Activated B cell treated with CpG ODN at 0.5 μM for 24 hours (primary cell): ENCODE measurements at regions of chr1 and their contacts with region 1.

Region 1: DNA sequence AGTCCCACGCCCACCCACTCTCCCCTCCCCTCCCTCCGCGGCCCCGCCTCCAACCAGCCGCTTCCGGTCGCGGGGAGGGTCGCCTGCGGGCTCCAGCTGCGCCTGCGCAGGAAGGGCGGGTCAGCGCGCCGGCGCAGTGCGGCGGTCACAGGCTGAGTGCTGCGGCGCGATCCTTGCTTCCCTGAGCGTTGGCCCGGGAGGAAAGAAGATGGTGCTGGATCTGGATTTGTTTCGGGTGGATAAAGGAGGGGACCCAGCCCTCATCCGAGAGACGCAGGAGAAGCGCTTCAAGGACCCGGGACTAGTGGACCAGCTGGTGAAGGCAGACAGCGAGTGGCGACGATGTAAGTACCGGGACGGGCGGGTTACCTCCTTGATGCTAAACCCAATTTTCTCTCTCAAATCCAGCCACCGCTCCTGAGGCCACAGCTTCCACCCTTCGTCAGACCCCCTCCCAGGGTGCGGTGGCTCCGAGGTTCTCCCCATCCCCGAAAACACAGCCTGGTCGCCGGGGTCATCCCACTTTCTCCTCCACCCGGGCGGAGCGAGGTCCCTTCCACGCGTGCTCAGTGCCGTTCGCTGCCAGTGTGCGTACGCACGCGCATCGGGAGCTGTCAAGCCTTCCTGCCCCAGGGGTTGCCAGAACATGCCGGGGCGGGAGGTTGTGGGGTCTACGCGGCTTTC is at the start of gene SARS1:
- DNase-seq: peak; percentile 93
- ATAC-seq: peak; percentile 84
- H3K4me3 Mint-ChIP-seq: peak within 1 kb of the TSS; percentile 100
- H3K27ac Mint-ChIP-seq: peak within 1 kb of the TSS; percentile 98
- H3K4me1 Mint-ChIP-seq: peaks cover 39% of the 10 kb centered on the region
- H3K27me3 Mint-ChIP-seq: no peaks in the 10 kb centered on the region
- CTCF ChIP-seq: no peak
- total RNA-seq, gene SARS1: 182 and 188 TPM in 2 replicates

Region 2: GRCh38 chr1:108963052-108963686 is 250.8 kb before region 1 on chr1 and contains the start of gene CLCC1:
- CTCF ChIA-PET with region 1: no interaction called
- POLR2A ChIA-PET with region 1: interaction called, 12 read pairs
- intact Hi-C with region 1: loop called (anchors 1 kb)
- DNase-seq: peak; percentile 84
- ATAC-seq: peak; percentile 94
- H3K4me3 Mint-ChIP-seq: peak within 1 kb of the TSS; percentile 88
- H3K27ac Mint-ChIP-seq: peak within 1 kb of the TSS; percentile 91
- H3K4me1 Mint-ChIP-seq: peaks cover 35% of the 10 kb centered on the region
- H3K27me3 Mint-ChIP-seq: no peaks in the 10 kb centered on the region
- CTCF ChIP-seq: no peak
- total RNA-seq, gene CLCC1: 19.5 and 28.3 TPM in 2 replicates

Region 3: GRCh38 chr1:109075531-109076490 is 138.1 kb before region 1 on chr1 and contains the start of gene TAF13:
- CTCF ChIA-PET with region 1: no interaction called
- POLR2A ChIA-PET with region 1: interaction called, 4 read pairs
- intact Hi-C with region 1: loop called (anchors 1 kb)
- DNase-seq: peak; percentile 92
- ATAC-seq: peak; percentile 99
- H3K4me3 Mint-ChIP-seq: peak within 1 kb of the TSS; percentile 97
- H3K27ac Mint-ChIP-seq: peak within 1 kb of the TSS; percentile 96
- H3K4me1 Mint-ChIP-seq: peaks cover 25% of the 10 kb centered on the region
- H3K27me3 Mint-ChIP-seq: no peaks in the 10 kb centered on the region
- CTCF ChIP-seq: no peak
- total RNA-seq, gene TAF13: 18.5 and 21.2 TPM in 2 replicates

Region 4: DNA sequence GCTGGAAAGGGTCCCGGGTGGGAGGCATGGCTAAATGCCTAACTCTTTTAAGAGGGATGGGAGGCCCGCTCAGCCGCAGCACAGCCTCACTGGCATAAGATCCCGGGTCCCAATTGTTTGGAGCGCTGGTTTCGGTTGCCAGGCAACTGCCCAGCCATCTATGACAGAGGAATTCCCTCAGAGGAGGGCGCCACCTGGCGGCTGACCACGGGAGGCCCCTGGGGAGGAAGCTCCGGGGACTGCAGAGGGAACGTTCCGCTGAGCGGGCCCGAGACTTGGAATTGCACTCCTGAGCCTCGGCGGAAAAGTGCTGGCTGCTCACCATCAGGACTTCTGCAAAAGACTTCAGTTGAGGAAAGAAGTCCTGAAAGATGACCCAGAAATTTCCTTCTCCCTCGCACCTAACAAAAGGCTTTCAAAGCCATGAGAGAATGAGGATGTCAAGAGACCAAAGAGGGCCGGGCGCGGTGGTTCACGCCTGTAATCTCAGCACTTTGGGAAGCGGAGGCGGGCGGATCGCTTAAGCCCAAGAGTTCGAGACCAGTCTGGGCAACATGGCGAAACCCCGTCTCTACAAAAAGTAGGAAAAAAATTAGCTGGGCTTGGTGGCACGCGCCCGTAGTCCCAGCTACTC is 101.2 kb before region 1 on chr1:
- CTCF ChIA-PET with region 1: no interaction called
- POLR2A ChIA-PET with region 1: interaction called, 3 read pairs
- intact Hi-C with region 1: loop called (anchors 5 kb)
- DNase-seq: peak; percentile 83
- ATAC-seq: peak; percentile 75
- H3K4me3 Mint-ChIP-seq: peak overlapping the region; percentile 77
- H3K27ac Mint-ChIP-seq: peak overlapping the region; percentile 56
- H3K4me1 Mint-ChIP-seq: peaks cover 25% of the 10 kb centered on the region
- H3K27me3 Mint-ChIP-seq: peaks cover 27% of the 10 kb centered on the region
- CTCF ChIP-seq: peak; percentile 88

Region 5: GRCh38 chr1:109181105-109181806 is 32.7 kb before region 1 on chr1:
- CTCF ChIA-PET with region 1: no interaction called
- POLR2A ChIA-PET with region 1: no interaction called
- intact Hi-C with region 1: no loop called
- DNase-seq: no peak
- ATAC-seq: no peak
- H3K4me3 Mint-ChIP-seq: no peak overlapping the region
- H3K27ac Mint-ChIP-seq: no peak overlapping the region
- H3K4me1 Mint-ChIP-seq: no peaks in the 10 kb centered on the region
- H3K27me3 Mint-ChIP-seq: no peaks in the 10 kb centered on the region
- CTCF ChIP-seq: no peak

Region 6: GRCh38 chr1:109248797-109249642 is 35.1 kb after region 1 on chr1 and contains the start of gene CELSR2:
- CTCF ChIA-PET with region 1: no interaction called
- POLR2A ChIA-PET with region 1: interaction called, 3 read pairs
- intact Hi-C with region 1: loop called (anchors 2 kb)
- DNase-seq: peak; percentile 54
- ATAC-seq: peak; percentile 89
- H3K4me3 Mint-ChIP-seq: peak within 1 kb of the TSS; percentile 71
- H3K27ac Mint-ChIP-seq: no peak within 1 kb of the TSS
- H3K4me1 Mint-ChIP-seq: peaks cover 12% of the 10 kb centered on the region
- H3K27me3 Mint-ChIP-seq: peaks cover 23% of the 10 kb centered on the region
- CTCF ChIP-seq: no peak
- total RNA-seq, gene CELSR2: 0.81 and 1.1 TPM in 2 replicates

Region 7: DNA sequence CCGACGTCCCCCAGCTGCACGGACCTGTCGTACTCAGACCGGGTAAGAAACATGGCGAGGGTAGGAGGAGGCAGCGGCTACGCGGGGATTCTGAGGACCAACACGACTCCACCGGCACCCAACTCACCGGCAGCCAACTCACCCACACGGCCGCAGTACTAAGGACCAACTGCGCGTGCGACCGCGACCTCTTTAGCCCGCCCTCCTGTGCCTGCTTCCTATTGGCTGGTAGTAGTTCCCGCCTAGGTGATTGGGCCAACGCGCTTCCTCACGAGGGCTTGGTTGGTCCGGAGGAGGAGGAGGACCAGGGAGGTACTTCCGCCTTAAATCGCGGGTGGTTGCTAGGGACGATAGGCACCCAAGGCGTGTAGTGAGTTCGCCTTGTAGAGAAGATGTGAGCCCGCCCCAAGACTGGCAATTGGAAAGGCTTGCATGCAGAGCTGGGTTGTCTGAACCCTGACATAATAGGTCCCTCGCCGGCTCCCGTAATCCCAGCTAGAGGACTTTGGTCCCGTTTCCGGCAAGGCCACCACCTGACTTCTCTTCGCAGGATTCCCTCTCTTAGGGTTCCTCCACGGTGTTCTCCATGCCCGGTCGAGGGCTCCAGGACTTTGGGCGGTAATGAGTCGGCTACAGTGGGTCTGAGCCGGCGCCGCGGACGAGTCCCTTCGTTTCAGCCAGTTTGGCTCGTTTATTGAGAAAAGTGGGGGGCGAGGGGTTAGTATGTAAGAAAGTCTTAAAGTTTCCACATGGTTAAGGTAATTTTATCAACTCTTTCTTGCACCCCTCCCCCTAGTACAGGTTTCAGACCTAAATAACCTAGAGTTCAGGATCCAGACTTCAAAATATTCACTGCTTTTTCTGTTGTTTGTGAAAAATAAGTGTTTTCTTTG is 212.6 kb after region 1 on chr1 and contains the start of gene PSMA5:
- CTCF ChIA-PET with region 1: no interaction called
- POLR2A ChIA-PET with region 1: interaction called, 15 read pairs
- intact Hi-C with region 1: loop called (anchors 1 kb)
- DNase-seq: peak; percentile 81
- ATAC-seq: peak; percentile 97
- H3K4me3 Mint-ChIP-seq: peak within 1 kb of the TSS; percentile 96
- H3K27ac Mint-ChIP-seq: peak within 1 kb of the TSS; percentile 97
- H3K4me1 Mint-ChIP-seq: peaks cover 37% of the 10 kb centered on the region
- H3K27me3 Mint-ChIP-seq: no peaks in the 10 kb centered on the region
- CTCF ChIP-seq: no peak
- total RNA-seq, gene PSMA5: 105 and 125 TPM in 2 replicates